ENCODE measurements at regions of chr6 and their contacts with region 1.

Region 1: GRCh38 chr6:139364302-139364981 is 10.0 kb downstream of the CITED2 start:
- DNase-seq: peak in 3 of 14 experiments; percentile 72 to 75 (median 72)
- ATAC-seq: peak; percentile 59
- H3K4me3 ChIP-seq: no peak overlapping the region
- H3K4me3 Mint-ChIP-seq: no peak overlapping the region
- H3K27ac ChIP-seq: no peak overlapping the region
- H3K27ac Mint-ChIP-seq: no peak overlapping the region
- H3K4me1 ChIP-seq: peaks cover 9% of the 10 kb centered on the region
- H3K4me1 Mint-ChIP-seq: peaks cover 58% of the 10 kb centered on the region
- H3K27me3 ChIP-seq: no peaks in the 10 kb centered on the region
- H3K27me3 Mint-ChIP-seq: no peaks in the 10 kb centered on the region
- CTCF ChIP-seq: peak; percentile 91

Region 2: DNA sequence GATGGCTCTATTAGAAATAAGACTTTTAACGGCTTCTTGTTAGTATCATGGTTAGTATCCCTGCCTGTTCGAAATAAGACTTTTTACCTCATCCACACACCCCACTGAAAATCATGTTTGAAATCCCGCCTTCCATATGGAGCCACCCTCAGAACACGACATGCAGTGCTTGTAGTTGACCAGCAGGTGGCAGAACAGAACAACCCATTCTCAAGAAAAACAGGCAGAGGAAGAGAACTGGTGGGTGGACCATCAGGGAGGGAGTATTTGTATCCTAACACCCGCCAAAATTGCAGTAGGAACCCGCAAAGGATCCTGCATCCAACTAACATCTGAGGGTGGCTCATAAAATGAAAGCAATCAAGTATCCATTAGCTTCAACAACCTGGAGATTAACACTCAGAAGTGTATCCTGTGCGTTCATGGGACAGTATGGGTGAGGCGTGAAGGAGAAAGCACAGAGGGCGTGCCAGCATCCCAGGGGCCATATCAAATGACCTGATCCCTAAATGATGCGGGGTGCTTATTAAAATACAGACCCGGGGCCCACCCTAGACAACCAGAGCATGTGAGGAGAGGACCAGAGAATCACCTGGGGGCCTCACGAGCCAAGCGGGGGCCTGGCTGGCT is 775.5 kb before region 1 on chr6:
- CTCF ChIA-PET with region 1: no interaction called
- POLR2A ChIA-PET with region 1: no interaction called
- intact Hi-C with region 1: loop called in 1 of 2 experiments (anchors 2 kb)
- DNase-seq: peak; percentile 9 to 80 (median 28)
- ATAC-seq: peak; percentile 39
- H3K4me3 ChIP-seq: no peak overlapping the region
- H3K4me3 Mint-ChIP-seq: no peak overlapping the region
- H3K27ac ChIP-seq: no peak overlapping the region
- H3K27ac Mint-ChIP-seq: no peak overlapping the region
- H3K4me1 ChIP-seq: peaks cover 6% of the 10 kb centered on the region
- H3K4me1 Mint-ChIP-seq: peaks cover 20% of the 10 kb centered on the region
- H3K27me3 ChIP-seq: no peaks in the 10 kb centered on the region
- H3K27me3 Mint-ChIP-seq: no peaks in the 10 kb centered on the region
- CTCF ChIP-seq: peak; percentile 96

Region 3: GRCh38 chr6:138817822-138818308 is 546.6 kb before region 1 on chr6:
- CTCF ChIA-PET with region 1: interaction called, 3 read pairs
- POLR2A ChIA-PET with region 1: interaction called, 6 read pairs
- intact Hi-C with region 1: loop called (anchors 1 kb)
- DNase-seq: no peak
- ATAC-seq: no peak
- H3K4me3 ChIP-seq: no peak overlapping the region
- H3K4me3 Mint-ChIP-seq: no peak overlapping the region
- H3K27ac ChIP-seq: no peak overlapping the region
- H3K27ac Mint-ChIP-seq: no peak overlapping the region
- H3K4me1 ChIP-seq: no peaks in the 10 kb centered on the region
- H3K4me1 Mint-ChIP-seq: peaks cover 6% of the 10 kb centered on the region
- H3K27me3 ChIP-seq: no peaks in the 10 kb centered on the region
- H3K27me3 Mint-ChIP-seq: no peaks in the 10 kb centered on the region
- CTCF ChIP-seq: no peak

Region 4: GRCh38 chr6:139219271-139219729 is 145.1 kb before region 1 on chr6:
- CTCF ChIA-PET with region 1: interaction called, 39 read pairs
- POLR2A ChIA-PET with region 1: interaction called, 43 read pairs
- intact Hi-C with region 1: loop called (anchors 1 kb)
- DNase-seq: peak; percentile 47 to 87 (median 68)
- ATAC-seq: peak; percentile 98
- H3K4me3 ChIP-seq: no peak overlapping the region
- H3K4me3 Mint-ChIP-seq: no peak overlapping the region
- H3K27ac ChIP-seq: no peak overlapping the region
- H3K27ac Mint-ChIP-seq: peak overlapping the region; percentile 1
- H3K4me1 ChIP-seq: peaks cover 8% of the 10 kb centered on the region
- H3K4me1 Mint-ChIP-seq: peaks cover 16% of the 10 kb centered on the region
- H3K27me3 ChIP-seq: no peaks in the 10 kb centered on the region
- H3K27me3 Mint-ChIP-seq: no peaks in the 10 kb centered on the region
- CTCF ChIP-seq: peak; percentile 85

Region 5: GRCh38 chr6:139230391-139230840 is 134.0 kb before region 1 on chr6:
- CTCF ChIA-PET with region 1: interaction called, 4 read pairs
- POLR2A ChIA-PET with region 1: interaction called, 4 read pairs
- intact Hi-C with region 1: loop called in 1 of 2 experiments (anchors 5 kb)
- DNase-seq: peak in 4 of 14 experiments; percentile 18 to 45 (median 32)
- ATAC-seq: no peak
- H3K4me3 ChIP-seq: no peak overlapping the region
- H3K4me3 Mint-ChIP-seq: no peak overlapping the region
- H3K27ac ChIP-seq: no peak overlapping the region
- H3K27ac Mint-ChIP-seq: no peak overlapping the region
- H3K4me1 ChIP-seq: peaks cover 5% of the 10 kb centered on the region
- H3K4me1 Mint-ChIP-seq: peaks cover 7% of the 10 kb centered on the region
- H3K27me3 ChIP-seq: no peaks in the 10 kb centered on the region
- H3K27me3 Mint-ChIP-seq: no peaks in the 10 kb centered on the region
- CTCF ChIP-seq: no peak

Region 6: DNA sequence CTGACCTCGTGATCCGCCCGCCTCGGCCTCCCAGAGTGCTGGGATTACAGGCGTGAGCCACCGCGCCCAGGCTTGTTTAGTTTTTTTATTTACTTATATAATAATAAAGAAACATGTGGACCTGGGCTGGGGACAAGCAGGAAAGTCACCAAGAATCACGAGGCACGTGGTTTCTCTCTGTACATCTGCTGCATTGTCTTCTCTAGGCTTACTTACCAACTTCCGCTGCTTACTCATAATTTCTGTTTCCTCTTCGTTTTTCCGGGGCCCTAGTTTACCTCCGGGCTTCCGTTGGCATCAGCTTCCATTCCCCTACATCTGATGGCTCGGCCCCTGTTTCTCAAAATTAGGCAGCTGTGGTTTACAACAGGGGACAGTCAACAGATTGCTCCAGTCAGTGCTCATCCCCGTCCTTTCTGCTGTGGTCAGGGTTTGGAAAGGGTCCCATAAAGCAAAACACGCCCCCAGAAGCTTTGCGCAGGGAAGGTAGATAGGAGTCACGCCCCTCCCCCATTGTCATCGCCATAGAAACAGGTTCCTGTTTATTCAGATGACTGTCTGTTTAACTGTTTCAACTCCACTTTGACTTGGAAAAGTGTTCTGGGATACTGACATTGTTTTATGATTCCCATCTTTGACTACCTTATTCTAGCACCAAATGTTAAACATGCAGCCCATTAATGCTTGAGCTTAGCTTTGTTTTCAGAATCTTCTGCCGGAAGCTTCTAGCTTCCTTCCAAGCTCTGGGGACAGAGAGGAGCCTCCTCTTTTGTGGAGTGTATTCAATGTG is 40.7 kb before region 1 on chr6:
- CTCF ChIA-PET with region 1: interaction called, 5 read pairs
- POLR2A ChIA-PET with region 1: interaction called, 8 read pairs
- intact Hi-C with region 1: loop called in 1 of 2 experiments (anchors 5 kb)
- DNase-seq: peak; percentile 61 to 92 (median 72)
- ATAC-seq: peak; percentile 86
- H3K4me3 ChIP-seq: peak overlapping the region; percentile 57
- H3K4me3 Mint-ChIP-seq: peak overlapping the region; percentile 93
- H3K27ac ChIP-seq: peak overlapping the region; percentile 91 to 97
- H3K27ac Mint-ChIP-seq: peak overlapping the region; percentile 99
- H3K4me1 ChIP-seq: peaks cover 30% of the 10 kb centered on the region
- H3K4me1 Mint-ChIP-seq: peaks cover 50% of the 10 kb centered on the region
- H3K27me3 ChIP-seq: no peaks in the 10 kb centered on the region
- H3K27me3 Mint-ChIP-seq: no peaks in the 10 kb centered on the region
- CTCF ChIP-seq: no peak

Region 7: GRCh38 chr6:139429580-139430145 is 65.2 kb after region 1 on chr6:
- CTCF ChIA-PET with region 1: no interaction called
- POLR2A ChIA-PET with region 1: no interaction called
- intact Hi-C with region 1: no loop called
- DNase-seq: no peak
- ATAC-seq: no peak
- H3K4me3 ChIP-seq: no peak overlapping the region
- H3K4me3 Mint-ChIP-seq: no peak overlapping the region
- H3K27ac ChIP-seq: no peak overlapping the region
- H3K27ac Mint-ChIP-seq: no peak overlapping the region
- H3K4me1 ChIP-seq: peaks cover 3% of the 10 kb centered on the region
- H3K4me1 Mint-ChIP-seq: no peaks in the 10 kb centered on the region
- H3K27me3 ChIP-seq: no peaks in the 10 kb centered on the region
- H3K27me3 Mint-ChIP-seq: peaks cover 8% of the 10 kb centered on the region
- CTCF ChIP-seq: no peak

Measured in CD4-positive, alpha-beta T cell (primary cell).